Endothelial cell of umbilical vein (primary cell): ENCODE measurements at regions of chrX and their contacts with region 1.

Region 1: GRCh38 chrX:115058276-115058675 is 40.9 kb upstream of the IL13RA2 start:
- DNase-seq: peak; percentile 72
- H3K4me3 ChIP-seq: no peak overlapping the region
- H3K27ac ChIP-seq: peak overlapping the region; percentile 11
- H3K4me1 ChIP-seq: no peaks in the 10 kb centered on the region
- H3K27me3 ChIP-seq: no peaks in the 10 kb centered on the region
- CTCF ChIP-seq: no peak
- POLR2A ChIP-seq: no peak

Region 2: GRCh38 chrX:115018037-115018647 is 40.1 kb before region 1 on chrX:
- CTCF ChIA-PET with region 1: interaction called, 4 read pairs
- POLR2A ChIA-PET with region 1: no interaction called
- dilution Hi-C with region 1: no loop called
- intact Hi-C with region 1: loop called (anchors 2 kb)
- DNase-seq: no peak
- H3K4me3 ChIP-seq: no peak overlapping the region
- H3K27ac ChIP-seq: no peak overlapping the region
- H3K4me1 ChIP-seq: peaks cover 10% of the 10 kb centered on the region
- H3K27me3 ChIP-seq: no peaks in the 10 kb centered on the region
- CTCF ChIP-seq: peak; percentile 8 to 9
- POLR2A ChIP-seq: no peak

Region 3: GRCh38 chrX:115047181-115047580 is 11.1 kb before region 1 on chrX:
- CTCF ChIA-PET with region 1: no interaction called
- POLR2A ChIA-PET with region 1: no interaction called
- dilution Hi-C with region 1: no loop called
- intact Hi-C with region 1: loop called (anchors 2 kb)
- DNase-seq: no peak
- H3K4me3 ChIP-seq: no peak overlapping the region
- H3K27ac ChIP-seq: no peak overlapping the region
- H3K4me1 ChIP-seq: no peaks in the 10 kb centered on the region
- H3K27me3 ChIP-seq: no peaks in the 10 kb centered on the region
- CTCF ChIP-seq: no peak
- POLR2A ChIP-seq: no peak